Adrenal gland (tissue), 19 donors: ENCODE measurements at regions of chr2 and their contacts with region 1.

Region 1: GRCh38 chr2:112481050-112481527 is 867 bp upstream of the TTL start:
- DNase-seq: peak; percentile 80 to 91 (median 85)
- H3K4me3 ChIP-seq: peak overlapping the region in 3 of 4 donors; percentile 21 to 95 (median 40)
- H3K27ac ChIP-seq: peak overlapping the region in 4 of 5 donors; percentile 53 to 93 (median 82)
- H3K4me1 ChIP-seq: peaks cover 7 to 19% of the 10 kb centered on the region in 2 donors
- H3K27me3 ChIP-seq: no peaks in the 10 kb centered on the region
- CTCF ChIP-seq: peak; percentile 53 to 80 (median 72)
- POLR2A ChIP-seq: no peak

Region 2: DNA sequence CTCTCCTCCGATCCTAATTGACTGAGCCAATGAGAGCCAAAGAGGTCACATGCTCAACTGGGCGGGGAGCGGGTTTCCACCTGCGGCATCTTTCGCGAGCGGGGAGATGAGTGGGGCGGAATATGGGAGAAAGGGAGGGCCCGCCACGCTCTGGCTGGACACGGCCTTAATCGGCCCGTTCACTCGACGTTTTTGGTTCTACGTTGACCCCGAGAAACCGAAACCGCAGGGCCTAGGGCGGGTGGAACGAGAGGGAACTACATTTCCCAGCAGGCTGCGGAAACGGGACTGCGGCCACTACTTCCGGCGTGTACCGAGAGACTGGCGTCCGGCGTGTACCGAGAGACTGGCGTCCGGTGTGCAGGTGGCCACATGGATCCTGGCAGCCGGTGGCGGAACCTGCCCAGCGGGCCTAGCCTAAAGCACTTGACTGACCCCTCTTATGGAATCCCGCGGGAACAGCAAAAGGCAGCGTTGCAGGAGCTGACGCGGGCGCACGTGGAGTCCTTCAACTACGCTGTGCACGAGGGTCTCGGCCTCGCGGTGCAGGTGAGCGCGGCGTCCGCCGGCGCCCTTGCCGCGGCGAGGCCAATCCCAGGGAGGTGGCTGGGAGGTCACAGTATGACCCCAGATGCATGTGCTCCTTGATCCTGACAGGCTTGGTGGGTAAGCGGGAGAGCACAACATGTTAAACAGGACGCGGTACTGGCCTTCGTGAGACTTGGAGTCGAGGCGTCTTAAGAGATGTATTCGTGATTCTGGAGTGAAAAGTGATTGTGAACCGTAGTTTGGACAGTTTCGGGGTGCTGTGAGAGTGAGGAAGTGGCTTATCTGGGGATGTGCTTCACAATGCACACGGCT is 61.3 kb after region 1 on chr2 and contains the start of gene POLR1B:
- intact Hi-C with region 1: loop called in 1 of 2 experiments (anchors 5 kb)
- DNase-seq: peak; percentile 82 to 94 (median 89)
- H3K4me3 ChIP-seq: peak within 1 kb of the TSS; percentile 26 to 99 (median 80)
- H3K27ac ChIP-seq: peak within 1 kb of the TSS; percentile 68 to 95 (median 92)
- H3K4me1 ChIP-seq: peaks cover 11 to 24% of the 10 kb centered on the region in 2 donors
- H3K27me3 ChIP-seq: no peaks in the 10 kb centered on the region
- CTCF ChIP-seq: no peak
- POLR2A ChIP-seq: no peak
- total RNA-seq, gene POLR1B: 10.7 to 30.3 (median 21.3) TPM

Region 3: GRCh38 chr2:112579241-112579640 is 98.2 kb after region 1 on chr2:
- intact Hi-C with region 1: loop called in 1 of 2 experiments (anchors 5 kb)
- DNase-seq: peak in 4 of 7 donors; percentile 7 to 40 (median 32)
- H3K4me3 ChIP-seq: no peak overlapping the region
- H3K27ac ChIP-seq: no peak overlapping the region
- H3K4me1 ChIP-seq: peaks cover 3 to 15% of the 10 kb centered on the region in 2 donors
- H3K27me3 ChIP-seq: no peaks in the 10 kb centered on the region
- CTCF ChIP-seq: no peak
- POLR2A ChIP-seq: no peak